Heart left ventricle (tissue), 16 donors: ENCODE measurements at regions of chr15 and their contacts with region 1.

Region 1: DNA sequence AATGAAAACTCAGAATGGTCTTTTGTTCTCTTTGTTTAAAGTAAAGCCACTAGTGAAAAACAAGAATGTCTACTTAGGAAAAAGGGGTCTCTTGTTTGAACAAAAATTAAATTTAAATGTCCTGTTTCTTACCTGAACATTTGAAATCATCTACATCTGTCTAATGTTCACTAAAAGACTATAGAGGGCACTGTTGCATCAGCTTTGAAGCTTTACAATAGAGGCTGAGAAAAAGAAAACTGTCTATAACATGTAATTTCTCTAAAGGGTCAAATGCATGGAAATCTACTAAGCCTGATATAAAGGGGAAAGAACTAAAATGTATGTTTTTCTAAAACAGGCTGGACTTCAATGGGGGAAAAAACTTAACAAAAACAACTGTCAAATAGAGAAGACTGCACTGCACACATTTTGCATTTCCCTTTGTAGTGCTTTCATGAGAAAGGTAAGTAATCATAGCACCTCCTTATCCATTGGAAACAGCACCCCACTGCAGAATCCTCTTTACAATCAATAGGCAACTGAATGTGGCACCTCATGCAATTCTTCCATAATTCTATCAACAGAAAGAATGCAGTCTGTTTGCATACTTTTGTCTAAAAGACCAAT is 26.3 kb downstream of the DPH6 start:
- DNase-seq: no peak
- ATAC-seq: peak in 3 of 4 donors; percentile 61 to 85 (median 80)
- H3K4me3 ChIP-seq: no peak overlapping the region
- H3K27ac ChIP-seq: no peak overlapping the region
- H3K4me1 ChIP-seq: peaks cover 0 to 27% (median 8%) of the 10 kb centered on the region in 12 donors
- H3K27me3 ChIP-seq: no peaks in the 10 kb centered on the region
- CTCF ChIP-seq: peak; percentile 44 to 76 (median 68)
- POLR2A ChIP-seq: no peak

Region 2: GRCh38 chr15:35496585-35496984 is 23.1 kb before region 1 on chr15:
- intact Hi-C with region 1: no loop called
- DNase-seq: no peak
- ATAC-seq: no peak
- H3K4me3 ChIP-seq: no peak overlapping the region
- H3K27ac ChIP-seq: no peak overlapping the region
- H3K4me1 ChIP-seq: peaks cover 0 to 5% (median 0%) of the 10 kb centered on the region in 12 donors
- H3K27me3 ChIP-seq: no peaks in the 10 kb centered on the region
- CTCF ChIP-seq: no peak
- POLR2A ChIP-seq: no peak

Region 3: DNA sequence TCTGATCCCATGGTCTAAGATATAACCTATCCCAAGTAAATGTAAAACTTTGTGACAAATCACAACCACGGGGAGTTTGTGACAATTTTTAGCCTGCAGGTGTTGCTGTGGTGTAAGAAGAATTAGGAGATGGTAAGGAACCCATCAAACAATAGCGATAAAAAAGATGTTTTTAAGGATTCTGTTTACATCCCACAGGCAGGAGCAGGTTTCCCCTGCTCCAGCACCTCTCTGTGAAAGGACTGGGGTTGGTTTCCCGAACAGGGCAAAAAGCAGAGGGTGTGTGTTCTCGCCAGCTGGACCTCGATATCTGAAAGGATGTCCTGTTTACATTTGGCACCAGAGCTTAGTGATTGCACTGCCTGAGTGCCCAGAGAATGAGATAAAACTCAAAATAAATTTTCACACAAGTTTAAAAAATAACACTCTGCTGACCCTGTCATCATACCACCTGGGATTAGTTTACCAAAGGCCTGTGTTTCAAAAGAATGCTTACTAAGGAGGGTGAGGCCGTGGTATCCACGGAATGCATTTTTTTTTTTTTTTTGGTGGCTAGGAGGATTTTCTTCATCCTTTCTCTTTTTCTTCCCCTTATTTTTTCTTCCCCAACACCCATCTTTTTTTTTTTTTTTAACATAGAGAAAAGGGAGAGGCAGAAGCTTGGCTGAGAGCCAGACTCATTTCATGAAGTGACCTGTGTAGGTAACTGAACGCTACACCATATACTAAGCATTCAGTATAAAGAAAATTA is 178.1 kb after region 1 on chr15:
- intact Hi-C with region 1: loop called in 1 of 10 experiments (anchors 10 kb)
- DNase-seq: peak in 2 of 5 donors; percentile 33 to 36
- ATAC-seq: peak; percentile 65 to 86 (median 76)
- H3K4me3 ChIP-seq: no peak overlapping the region
- H3K27ac ChIP-seq: peak overlapping the region; percentile 19 to 68 (median 44)
- H3K4me1 ChIP-seq: peaks cover 0 to 46% (median 33%) of the 10 kb centered on the region in 12 donors
- H3K27me3 ChIP-seq: no peaks in the 10 kb centered on the region
- CTCF ChIP-seq: peak in 4 of 12 donors; percentile 13 to 37 (median 24)
- POLR2A ChIP-seq: no peak

Region 4: GRCh38 chr15:35912196-35912595 is 392.6 kb after region 1 on chr15:
- intact Hi-C with region 1: loop called in 8 of 10 experiments (anchors 2 to 10 kb)
- DNase-seq: no peak
- ATAC-seq: peak; percentile 55 to 82 (median 76)
- H3K4me3 ChIP-seq: no peak overlapping the region
- H3K27ac ChIP-seq: no peak overlapping the region
- H3K4me1 ChIP-seq: peaks cover 0 to 10% (median 0%) of the 10 kb centered on the region in 12 donors
- H3K27me3 ChIP-seq: no peaks in the 10 kb centered on the region
- CTCF ChIP-seq: peak in 10 of 12 donors; percentile 21 to 54 (median 38)
- POLR2A ChIP-seq: no peak

Region 5: DNA sequence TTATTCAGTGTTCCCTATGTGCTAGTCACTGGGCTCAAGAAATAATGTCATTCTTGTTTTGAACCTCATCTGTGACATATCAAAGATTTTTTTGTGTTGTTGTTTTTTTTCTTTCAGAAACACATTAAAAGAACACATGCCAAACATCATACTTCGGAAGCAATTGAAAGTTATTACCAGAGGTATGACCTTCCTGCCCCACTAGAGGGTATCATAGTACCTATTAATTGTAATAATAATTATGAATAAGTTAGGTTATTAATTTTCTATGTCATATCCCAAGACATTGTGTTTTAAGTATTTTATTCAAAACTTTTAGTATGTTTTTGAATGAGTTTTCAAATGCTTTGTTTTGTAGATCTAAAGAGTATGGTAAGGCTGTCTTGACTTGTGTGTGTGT is 1125.5 kb after region 1 on chr15:
- intact Hi-C with region 1: loop called in 1 of 10 experiments (anchors 5 kb)
- DNase-seq: no peak
- ATAC-seq: no peak
- H3K4me3 ChIP-seq: no peak overlapping the region
- H3K27ac ChIP-seq: no peak overlapping the region
- H3K4me1 ChIP-seq: peaks cover 0 to 10% (median 0%) of the 10 kb centered on the region in 12 donors
- H3K27me3 ChIP-seq: no peaks in the 10 kb centered on the region
- CTCF ChIP-seq: peak in 8 of 12 donors; percentile 12 to 33 (median 18)
- POLR2A ChIP-seq: no peak

Region 6: DNA sequence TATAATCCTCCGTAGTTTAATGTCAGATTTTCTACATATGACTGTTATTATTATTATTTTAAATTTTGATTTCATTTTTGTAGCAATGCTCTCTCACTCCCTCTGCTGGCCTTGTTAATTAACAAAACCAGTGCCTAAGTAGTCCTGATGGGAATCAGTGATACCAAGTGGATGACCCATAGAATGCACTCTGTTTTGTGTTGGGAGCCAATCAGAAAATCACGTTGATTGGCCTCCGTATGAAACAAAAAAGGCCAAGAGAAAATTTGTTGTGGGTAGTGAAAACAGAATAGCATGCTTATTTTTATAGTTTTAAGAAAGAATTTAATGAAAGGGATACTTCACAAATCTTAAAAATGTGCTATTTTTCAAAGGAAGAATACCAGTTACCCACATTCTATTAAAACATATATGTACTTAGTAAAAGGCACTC is 1615.1 kb after region 1 on chr15:
- intact Hi-C with region 1: loop called in 2 of 10 experiments (anchors 10 kb)
- DNase-seq: no peak
- ATAC-seq: peak in 1 of 4 donors; percentile 81
- H3K4me3 ChIP-seq: no peak overlapping the region
- H3K27ac ChIP-seq: no peak overlapping the region
- H3K4me1 ChIP-seq: peaks cover 0 to 5% (median 0%) of the 10 kb centered on the region in 12 donors
- H3K27me3 ChIP-seq: no peaks in the 10 kb centered on the region
- CTCF ChIP-seq: peak; percentile 49 to 82 (median 67)
- POLR2A ChIP-seq: no peak